Heart left ventricle (tissue), 16 donors: ENCODE measurements at regions of chr10 and their contacts with region 1.

Region 1: GRCh38 chr10:79093658-79094411 is 25.1 kb downstream of the ZMIZ1 start:
- DNase-seq: peak in 1 of 5 donors; percentile 87
- ATAC-seq: peak; percentile 74 to 88 (median 84)
- H3K4me3 ChIP-seq: peak overlapping the region in 4 of 12 donors; percentile 1 to 26 (median 12)
- H3K27ac ChIP-seq: peak overlapping the region; percentile 67 to 96 (median 78)
- H3K4me1 ChIP-seq: peaks cover 12 to 100% (median 94%) of the 10 kb centered on the region in 12 donors
- H3K27me3 ChIP-seq: no peaks in the 10 kb centered on the region
- CTCF ChIP-seq: no peak
- POLR2A ChIP-seq: no peak

Region 2: GRCh38 chr10:79144351-79145173 is 50.7 kb after region 1 on chr10:
- intact Hi-C with region 1: loop called in 2 of 10 experiments (anchors 2 to 10 kb)
- DNase-seq: peak in 1 of 5 donors; percentile 30
- ATAC-seq: no peak
- H3K4me3 ChIP-seq: no peak overlapping the region
- H3K27ac ChIP-seq: peak overlapping the region; percentile 43 to 98 (median 94)
- H3K4me1 ChIP-seq: peaks cover 59 to 100% (median 97%) of the 10 kb centered on the region in 12 donors
- H3K27me3 ChIP-seq: no peaks in the 10 kb centered on the region
- CTCF ChIP-seq: no peak
- POLR2A ChIP-seq: no peak